Common myeloid progenitor, CD34-positive (primary cell): ENCODE measurements at regions of chr11 and their contacts with region 1.

Region 1: GRCh38 chr11:3841426-3842350 is 929 bp upstream of the RHOG start:
- DNase-seq: peak; percentile 95 to 99 (median 98)
- H3K4me3 ChIP-seq: peak overlapping the region in 6 of 7 experiments; percentile 40 to 89 (median 57)
- H3K27ac ChIP-seq: peak overlapping the region; percentile 88 to 92
- H3K4me1 ChIP-seq: peaks cover 20 to 44% (median 42%) of the 10 kb centered on the region in 4 experiments
- H3K27me3 ChIP-seq: no peaks in the 10 kb centered on the region

Region 2: GRCh38 chr11:3824714-3825472 is 16.8 kb before region 1 on chr11:
- CTCF ChIA-PET with region 1: interaction called, 314 read pairs
- POLR2A ChIA-PET with region 1: interaction called, 12 read pairs
- DNase-seq: peak; percentile 85 to 91 (median 89)
- H3K4me3 ChIP-seq: no peak overlapping the region
- H3K27ac ChIP-seq: peak overlapping the region in 1 of 2 experiments; percentile 44
- H3K4me1 ChIP-seq: peaks cover under 1 to 13% (median 6%) of the 10 kb centered on the region in 4 experiments
- H3K27me3 ChIP-seq: no peaks in the 10 kb centered on the region